CD8-positive, alpha-beta memory T cell (primary cell): ENCODE measurements at regions of chrX and their contacts with region 1.

Region 1: DNA sequence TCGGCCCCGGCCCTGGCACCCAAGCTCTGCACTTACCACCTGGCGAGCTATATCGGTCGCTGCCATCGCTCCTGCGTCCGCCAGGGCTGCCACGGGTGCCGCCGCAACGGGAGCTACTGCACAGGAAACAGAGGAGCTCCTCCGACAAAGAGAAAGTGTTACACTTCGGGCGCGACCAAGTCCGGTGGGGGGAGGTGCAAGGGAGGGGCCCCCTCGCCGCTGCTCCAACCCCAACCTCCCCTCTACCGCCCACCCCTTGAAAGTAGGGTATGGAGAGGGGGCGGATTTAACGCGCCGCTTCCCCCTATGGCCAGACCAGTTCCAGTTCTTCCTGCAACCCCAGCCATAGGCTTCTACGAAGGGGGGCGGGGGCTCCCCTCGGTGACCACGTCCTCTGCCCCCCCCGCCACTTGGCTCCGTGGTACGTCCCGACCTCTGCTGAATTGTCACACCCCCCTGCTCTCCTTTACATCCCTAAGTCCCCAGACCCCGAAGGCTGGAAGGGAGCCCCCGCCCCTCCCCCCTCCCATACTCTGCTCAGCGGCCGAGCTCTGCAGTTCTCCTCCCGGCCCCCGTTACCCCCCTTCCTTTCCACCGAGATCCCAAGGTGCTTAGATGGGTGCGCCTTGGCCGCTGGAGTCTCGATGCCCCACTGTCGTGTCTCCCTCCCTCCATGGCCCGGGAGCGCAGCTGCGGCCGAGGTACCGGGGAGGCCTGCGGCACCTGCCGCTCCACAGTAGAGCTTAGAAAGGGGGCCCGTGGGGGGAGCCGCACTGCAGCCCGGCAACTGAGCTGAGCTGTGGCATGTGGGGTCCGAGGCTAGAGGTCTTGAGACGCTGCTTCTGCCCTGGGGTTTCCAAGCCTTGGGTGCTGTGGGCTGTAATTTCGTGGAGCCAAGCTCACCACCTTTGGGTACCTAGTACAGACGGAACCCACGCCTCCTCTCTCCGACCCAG is at the start of gene SEPTIN6:
- DNase-seq: peak; percentile 72 to 92 (median 90)
- H3K4me3 ChIP-seq: peak within 1 kb of the TSS; percentile 78
- H3K4me3 Mint-ChIP-seq: peak within 1 kb of the TSS; percentile 97 to 99 (median 99)
- H3K27ac ChIP-seq: peak within 1 kb of the TSS; percentile 89
- H3K27ac Mint-ChIP-seq: peak within 1 kb of the TSS; percentile 93 to 97 (median 95)
- H3K4me1 ChIP-seq: peaks cover 16% of the 10 kb centered on the region
- H3K4me1 Mint-ChIP-seq: peaks cover 21 to 40% (median 37%) of the 10 kb centered on the region in 3 donors
- H3K27me3 ChIP-seq: no peaks in the 10 kb centered on the region
- H3K27me3 Mint-ChIP-seq: peaks cover 0 to 3% of the 10 kb centered on the region in 2 donors
- total RNA-seq, gene SEPTIN6: 122 to 125 TPM

Region 2: GRCh38 chrX:119552508-119552907 is 140.8 kb before region 1 on chrX:
- CTCF ChIA-PET with region 1: no interaction called
- POLR2A ChIA-PET with region 1: no interaction called
- DNase-seq: no peak
- H3K4me3 ChIP-seq: no peak overlapping the region
- H3K4me3 Mint-ChIP-seq: no peak overlapping the region
- H3K27ac ChIP-seq: no peak overlapping the region
- H3K27ac Mint-ChIP-seq: no peak overlapping the region
- H3K4me1 ChIP-seq: no peaks in the 10 kb centered on the region
- H3K4me1 Mint-ChIP-seq: peaks cover 9 to 34% (median 19%) of the 10 kb centered on the region in 3 donors
- H3K27me3 ChIP-seq: no peaks in the 10 kb centered on the region
- H3K27me3 Mint-ChIP-seq: peaks cover 0 to 1% of the 10 kb centered on the region in 2 donors

Region 3: DNA sequence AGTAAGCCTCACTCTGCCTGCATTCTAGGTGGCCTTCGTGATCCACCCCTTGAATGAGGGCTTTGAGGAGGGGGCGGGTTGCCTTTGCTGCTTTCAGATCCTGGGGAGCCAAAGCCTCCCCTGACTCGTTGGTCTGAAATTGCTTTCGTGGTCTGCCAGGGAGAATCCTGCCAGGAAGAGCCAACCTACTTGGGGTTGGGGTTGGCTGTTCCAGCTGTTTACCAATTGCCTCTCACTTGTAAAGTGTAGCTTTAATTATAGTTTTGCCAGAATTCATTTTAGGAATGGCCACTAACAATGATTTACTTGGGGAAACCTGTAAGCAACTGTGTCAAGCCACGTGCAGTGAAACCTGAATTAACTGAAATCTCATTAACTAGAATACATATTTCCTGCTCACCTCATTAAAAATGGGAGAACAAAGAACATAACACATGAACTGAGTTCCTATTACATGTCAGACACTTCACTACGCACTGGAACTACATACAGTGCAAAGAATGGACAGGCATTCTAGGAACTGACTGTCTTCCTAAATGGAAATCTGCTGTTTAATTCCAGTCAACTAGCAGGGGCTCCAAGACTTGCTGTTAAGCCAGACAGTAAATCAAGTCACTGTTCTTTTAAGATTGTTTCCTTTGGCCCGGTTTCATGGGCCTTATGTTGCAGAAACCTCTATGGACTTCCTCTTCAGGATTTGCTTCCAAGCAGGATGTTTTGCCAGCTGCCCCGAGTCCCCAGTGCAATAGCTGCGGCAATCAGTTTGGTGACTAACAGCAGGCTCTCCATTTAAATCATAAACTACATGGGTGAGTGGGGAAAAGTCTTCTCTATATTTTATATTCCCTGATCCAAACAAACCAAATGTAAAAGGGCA is 70.7 kb before region 1 on chrX:
- CTCF ChIA-PET with region 1: no interaction called
- POLR2A ChIA-PET with region 1: no interaction called
- DNase-seq: no peak
- H3K4me3 ChIP-seq: no peak overlapping the region
- H3K4me3 Mint-ChIP-seq: no peak overlapping the region
- H3K27ac ChIP-seq: no peak overlapping the region
- H3K27ac Mint-ChIP-seq: peak overlapping the region in 4 of 8 donors; percentile 38 to 87 (median 53)
- H3K4me1 ChIP-seq: no peaks in the 10 kb centered on the region
- H3K4me1 Mint-ChIP-seq: peaks cover 0 to 3% (median 3%) of the 10 kb centered on the region in 3 donors
- H3K27me3 ChIP-seq: no peaks in the 10 kb centered on the region
- H3K27me3 Mint-ChIP-seq: no peaks in the 10 kb centered on the region

Region 4: GRCh38 chrX:119676949-119677653 is 16.2 kb before region 1 on chrX:
- CTCF ChIA-PET with region 1: interaction called, 32 read pairs
- POLR2A ChIA-PET with region 1: interaction called, 55 read pairs
- DNase-seq: no peak
- H3K4me3 ChIP-seq: peak overlapping the region; percentile 34
- H3K4me3 Mint-ChIP-seq: peak overlapping the region; percentile 81 to 95 (median 90)
- H3K27ac ChIP-seq: no peak overlapping the region
- H3K27ac Mint-ChIP-seq: peak overlapping the region; percentile 82 to 97 (median 96)
- H3K4me1 ChIP-seq: peaks cover 65% of the 10 kb centered on the region
- H3K4me1 Mint-ChIP-seq: peaks cover 61 to 75% (median 69%) of the 10 kb centered on the region in 3 donors
- H3K27me3 ChIP-seq: no peaks in the 10 kb centered on the region
- H3K27me3 Mint-ChIP-seq: peaks cover 0 to 1% of the 10 kb centered on the region in 2 donors

Region 5: GRCh38 chrX:119682019-119682989 is 11.0 kb before region 1 on chrX:
- CTCF ChIA-PET with region 1: interaction called, 32 read pairs
- POLR2A ChIA-PET with region 1: interaction called, 55 read pairs
- DNase-seq: peak in 3 of 5 donors; percentile 51 to 83 (median 72)
- H3K4me3 ChIP-seq: peak overlapping the region; percentile 49
- H3K4me3 Mint-ChIP-seq: peak overlapping the region; percentile 79 to 93 (median 86)
- H3K27ac ChIP-seq: peak overlapping the region; percentile 31
- H3K27ac Mint-ChIP-seq: peak overlapping the region; percentile 91 to 99 (median 96)
- H3K4me1 ChIP-seq: peaks cover 79% of the 10 kb centered on the region
- H3K4me1 Mint-ChIP-seq: peaks cover 78 to 88% (median 81%) of the 10 kb centered on the region in 3 donors
- H3K27me3 ChIP-seq: no peaks in the 10 kb centered on the region
- H3K27me3 Mint-ChIP-seq: peaks cover 0 to 2% of the 10 kb centered on the region in 2 donors